ENCODE measurements at regions of chr10 and their contacts with region 1.

Region 1: DNA sequence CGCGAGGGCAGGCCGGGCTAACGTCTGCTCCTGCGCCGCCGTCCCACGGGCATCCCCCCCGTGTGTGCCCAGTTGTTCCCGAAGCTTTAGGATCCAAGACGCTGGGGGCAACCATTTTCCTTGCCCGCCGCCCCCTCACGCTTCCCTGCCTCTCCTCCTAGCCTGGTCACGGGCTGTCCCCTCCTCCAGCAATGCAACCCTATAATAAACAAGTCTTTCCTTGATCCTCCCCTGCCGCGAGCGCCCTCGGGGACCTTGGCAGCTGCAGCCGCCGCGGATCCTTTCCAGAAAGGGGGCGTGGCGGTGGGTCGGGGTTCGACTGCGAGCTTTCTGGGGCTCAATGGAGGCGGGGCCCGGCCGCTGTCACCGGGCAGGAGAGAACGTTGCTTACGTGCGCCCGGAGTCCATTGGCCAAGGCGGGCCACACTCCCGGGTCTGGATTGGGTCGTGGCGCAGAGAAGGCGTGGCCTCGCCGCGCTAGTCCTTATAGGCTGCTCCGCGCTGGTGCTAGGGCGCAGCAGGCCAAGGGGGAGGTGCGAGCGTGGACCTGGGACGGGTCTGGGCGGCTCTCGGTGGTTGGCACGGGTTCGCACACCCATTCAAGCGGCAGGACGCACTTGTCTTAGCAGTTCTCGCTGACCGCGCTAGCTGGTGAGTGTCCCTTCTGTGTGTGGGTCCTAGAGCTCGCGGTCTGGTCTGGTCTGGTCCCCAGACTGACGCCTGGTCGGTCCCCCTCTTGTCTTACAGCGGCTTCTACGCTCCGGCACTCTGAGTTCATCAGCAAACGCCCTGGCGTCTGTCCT is at the start of gene DDIT4:
- DNase-seq: peak; percentile 100
- H3K4me3 Mint-ChIP-seq: peak within 1 kb of the TSS; percentile 96
- H3K27ac Mint-ChIP-seq: peak within 1 kb of the TSS; percentile 92
- H3K4me1 Mint-ChIP-seq: peaks cover 51% of the 10 kb centered on the region
- H3K27me3 Mint-ChIP-seq: no peaks in the 10 kb centered on the region
- total RNA-seq, gene DDIT4: 260 and 271 TPM in 2 replicates

Region 2: GRCh38 chr10:71359364-71360046 is 914.1 kb before region 1 on chr10:
- intact Hi-C with region 1: no loop called
- DNase-seq: no peak
- H3K4me3 Mint-ChIP-seq: no peak overlapping the region
- H3K27ac Mint-ChIP-seq: no peak overlapping the region
- H3K4me1 Mint-ChIP-seq: no peaks in the 10 kb centered on the region
- H3K27me3 Mint-ChIP-seq: no peaks in the 10 kb centered on the region

Region 3: DNA sequence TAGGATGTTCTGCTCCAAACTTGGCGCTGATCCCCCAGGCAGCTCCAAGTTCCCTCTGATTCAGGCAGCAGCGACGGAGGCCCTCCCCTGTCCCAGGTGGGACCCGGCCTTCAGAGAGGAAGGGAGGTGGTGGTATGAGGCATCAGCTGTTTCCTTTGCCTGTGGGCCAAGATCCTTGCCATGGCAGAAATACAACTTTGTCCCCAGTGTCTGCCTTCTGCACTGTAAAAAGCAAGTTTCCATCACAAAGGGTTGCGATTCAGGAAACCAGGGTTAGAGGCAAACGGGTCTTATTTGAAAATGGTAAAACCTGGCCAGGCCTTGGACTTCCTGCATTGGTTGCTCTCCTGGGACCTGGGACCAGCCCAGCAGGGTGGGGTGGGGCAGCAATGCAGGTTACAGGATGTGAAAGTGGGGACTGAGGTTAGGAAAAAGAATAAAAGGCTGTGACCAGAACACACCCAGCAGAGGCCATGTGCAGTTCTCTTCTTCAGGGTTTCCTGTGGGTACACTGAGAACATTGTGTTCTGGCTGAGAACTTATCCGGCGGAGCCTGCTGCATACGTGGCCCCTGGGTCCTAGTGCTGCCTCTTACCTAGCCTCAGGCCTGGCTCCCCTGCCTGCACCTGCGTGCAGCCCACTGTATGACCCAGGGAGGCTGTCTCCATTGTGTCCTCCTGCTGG is 25.0 kb before region 1 on chr10:
- intact Hi-C with region 1: loop called (anchors 1 kb)
- DNase-seq: peak; percentile 94
- H3K4me3 Mint-ChIP-seq: peak overlapping the region; percentile 82
- H3K27ac Mint-ChIP-seq: peak overlapping the region; percentile 96
- H3K4me1 Mint-ChIP-seq: peaks cover 65% of the 10 kb centered on the region
- H3K27me3 Mint-ChIP-seq: no peaks in the 10 kb centered on the region

Region 4: DNA sequence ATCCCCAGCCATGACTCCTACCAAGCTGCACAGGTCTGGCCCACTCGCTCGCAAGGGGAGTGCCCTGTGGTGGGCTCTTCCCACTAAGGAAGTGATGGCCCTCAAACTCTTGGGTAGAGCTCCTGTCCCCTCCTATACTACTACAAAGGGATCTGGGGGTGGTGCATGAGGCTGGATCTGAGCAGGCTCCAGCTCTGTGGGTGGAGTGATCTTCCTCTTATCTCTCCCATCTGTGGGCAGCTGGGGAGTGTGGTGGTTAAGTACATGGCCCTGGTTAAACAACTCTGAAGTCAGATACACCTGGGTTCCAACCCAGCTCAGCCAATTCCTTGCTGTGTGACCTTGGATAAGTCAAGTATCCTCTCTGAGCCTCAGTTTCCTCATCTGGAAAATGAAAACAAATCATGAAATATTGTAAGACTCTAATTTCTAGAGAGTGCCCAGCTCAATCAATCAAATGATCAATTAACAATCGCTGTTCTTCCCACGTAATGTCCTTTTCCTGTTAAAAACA is 17.5 kb after region 1 on chr10:
- intact Hi-C with region 1: loop called (anchors 1 kb)
- DNase-seq: peak; percentile 88
- H3K4me3 Mint-ChIP-seq: peak overlapping the region; percentile 27
- H3K27ac Mint-ChIP-seq: peak overlapping the region; percentile 64
- H3K4me1 Mint-ChIP-seq: peaks cover 62% of the 10 kb centered on the region
- H3K27me3 Mint-ChIP-seq: no peaks in the 10 kb centered on the region